Activated T-helper 1 cell treated with anti-CD3 and anti-CD28 coated beads, Interleukin-12 subunit alpha, Interleukin-12 subunit beta, Interleukin-2, Interleukin-4 antibody, amounts not matched to agents 30 ng/mL and 10 ng/mL and 1 ng/mL, durations not matched to agents 14 hours and 24 hours and 36 hours (primary cell): ENCODE measurements at regions of chr19 and their contacts with region 1.

Region 1: DNA sequence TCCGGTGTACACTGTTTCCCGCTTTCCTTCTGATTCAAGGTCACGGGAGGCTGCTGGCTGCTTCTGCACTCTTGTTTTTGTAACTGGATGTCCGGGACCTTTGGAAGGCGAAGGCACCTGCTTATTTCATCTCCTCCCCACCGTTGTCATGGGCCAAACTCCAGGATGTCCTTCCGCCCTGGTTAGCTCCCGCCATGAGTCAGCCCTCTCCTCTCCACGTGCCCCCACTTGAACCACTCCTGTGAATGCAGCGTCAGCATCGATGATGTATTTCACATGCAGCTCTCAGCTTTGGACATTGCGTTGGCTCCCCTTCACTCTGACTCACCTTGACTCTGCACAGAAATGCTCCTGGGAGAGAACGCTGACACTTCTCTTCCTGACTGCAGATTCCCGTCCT is 5.5 kb upstream of the GALP start:
- DNase-seq: no peak
- H3K4me3 Mint-ChIP-seq: no peak overlapping the region
- H3K27ac Mint-ChIP-seq: no peak overlapping the region
- H3K4me1 Mint-ChIP-seq: no peaks in the 10 kb centered on the region
- H3K27me3 Mint-ChIP-seq: peaks cover 4% of the 10 kb centered on the region

Region 2: GRCh38 chr19:56080669-56081401 is 89.4 kb before region 1 on chr19:
- intact Hi-C with region 1: loop called (anchors 1 kb)
- DNase-seq: peak; percentile 43
- H3K4me3 Mint-ChIP-seq: peak overlapping the region; percentile 76
- H3K27ac Mint-ChIP-seq: no peak overlapping the region
- H3K4me1 Mint-ChIP-seq: peaks cover 9% of the 10 kb centered on the region
- H3K27me3 Mint-ChIP-seq: no peaks in the 10 kb centered on the region

Region 3: GRCh38 chr19:56105090-56105701 is 65.1 kb before region 1 on chr19:
- intact Hi-C with region 1: loop called (anchors 1 kb)
- DNase-seq: peak; percentile 28
- H3K4me3 Mint-ChIP-seq: no peak overlapping the region
- H3K27ac Mint-ChIP-seq: no peak overlapping the region
- H3K4me1 Mint-ChIP-seq: peaks cover 6% of the 10 kb centered on the region
- H3K27me3 Mint-ChIP-seq: no peaks in the 10 kb centered on the region